ENCODE measurements at regions of chr1 and their contacts with region 1.

Region 1: GRCh38 chr1:115138968-115139367 is 49.7 kb upstream of the TSPAN2 start:
- DNase-seq: peak; percentile 84
- H3K4me3 ChIP-seq: no peak overlapping the region
- H3K27ac ChIP-seq: no peak overlapping the region
- H3K27me3 ChIP-seq: no peaks in the 10 kb centered on the region
- CTCF ChIP-seq: peak; percentile 97

Region 2: GRCh38 chr1:115166531-115167091 is 27.6 kb after region 1 on chr1:
- CTCF ChIA-PET with region 1: interaction called, 10 read pairs
- POLR2A ChIA-PET with region 1: no interaction called
- DNase-seq: no peak
- H3K4me3 ChIP-seq: no peak overlapping the region
- H3K27ac ChIP-seq: no peak overlapping the region
- H3K27me3 ChIP-seq: no peaks in the 10 kb centered on the region
- CTCF ChIP-seq: no peak

Region 3: DNA sequence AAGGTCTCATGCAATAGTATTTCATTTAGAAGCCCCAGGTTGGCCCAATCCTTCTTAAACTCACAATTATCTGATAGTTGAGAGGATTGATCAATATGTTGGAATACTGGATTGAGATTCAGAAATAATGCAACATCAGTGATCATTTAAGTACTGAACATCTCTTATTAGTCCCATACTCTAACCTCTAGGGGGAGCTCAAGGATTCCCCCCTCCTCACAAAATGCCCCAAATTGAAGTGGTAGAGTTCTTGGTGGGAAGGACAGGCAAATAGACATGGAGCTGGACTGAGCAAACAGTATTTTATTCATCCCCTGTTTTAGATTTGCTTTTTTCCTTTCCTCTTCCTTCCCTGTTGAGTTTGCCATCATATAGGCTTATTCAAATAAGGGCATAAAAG is 136.2 kb after region 1 on chr1:
- CTCF ChIA-PET with region 1: interaction called, 10 read pairs
- POLR2A ChIA-PET with region 1: no interaction called
- DNase-seq: no peak
- H3K4me3 ChIP-seq: no peak overlapping the region
- H3K27ac ChIP-seq: no peak overlapping the region
- H3K27me3 ChIP-seq: no peaks in the 10 kb centered on the region
- CTCF ChIP-seq: peak; percentile 52

Region 4: GRCh38 chr1:115314766-115315165 is 175.8 kb after region 1 on chr1:
- CTCF ChIA-PET with region 1: interaction called, 17 read pairs
- POLR2A ChIA-PET with region 1: no interaction called
- DNase-seq: peak; percentile 61
- H3K4me3 ChIP-seq: no peak overlapping the region
- H3K27ac ChIP-seq: no peak overlapping the region
- H3K27me3 ChIP-seq: no peaks in the 10 kb centered on the region
- CTCF ChIP-seq: no peak

Region 5: GRCh38 chr1:115337633-115338456 is 198.9 kb after region 1 on chr1 and contains the start of gene NGF:
- CTCF ChIA-PET with region 1: interaction called, 21 read pairs
- POLR2A ChIA-PET with region 1: interaction called, 4 read pairs
- DNase-seq: peak; percentile 32
- H3K4me3 ChIP-seq: peak within 1 kb of the TSS; percentile 93
- H3K27ac ChIP-seq: peak within 1 kb of the TSS; percentile 11
- H3K27me3 ChIP-seq: no peaks in the 10 kb centered on the region
- CTCF ChIP-seq: peak; percentile 3; the same call in 1 of the 2 replicates
- polyA plus RNA-seq, gene NGF: 6.7 and 7.3 TPM in 2 replicates

Region 6: GRCh38 chr1:115469703-115470476 is 330.9 kb after region 1 on chr1:
- CTCF ChIA-PET with region 1: interaction called, 235 read pairs
- POLR2A ChIA-PET with region 1: no interaction called
- DNase-seq: no peak
- H3K4me3 ChIP-seq: no peak overlapping the region
- H3K27ac ChIP-seq: no peak overlapping the region
- H3K27me3 ChIP-seq: no peaks in the 10 kb centered on the region
- CTCF ChIP-seq: peak; percentile 98

Region 7: GRCh38 chr1:115506926-115507589 is 368.1 kb after region 1 on chr1:
- CTCF ChIA-PET with region 1: interaction called, 48 read pairs
- POLR2A ChIA-PET with region 1: no interaction called
- DNase-seq: no peak
- H3K4me3 ChIP-seq: no peak overlapping the region
- H3K27ac ChIP-seq: no peak overlapping the region
- H3K27me3 ChIP-seq: no peaks in the 10 kb centered on the region
- CTCF ChIP-seq: peak; percentile 72

Measured in AG04450 (cell line).